ENCODE measurements at regions of chr2 and their contacts with region 1.

Region 1: DNA sequence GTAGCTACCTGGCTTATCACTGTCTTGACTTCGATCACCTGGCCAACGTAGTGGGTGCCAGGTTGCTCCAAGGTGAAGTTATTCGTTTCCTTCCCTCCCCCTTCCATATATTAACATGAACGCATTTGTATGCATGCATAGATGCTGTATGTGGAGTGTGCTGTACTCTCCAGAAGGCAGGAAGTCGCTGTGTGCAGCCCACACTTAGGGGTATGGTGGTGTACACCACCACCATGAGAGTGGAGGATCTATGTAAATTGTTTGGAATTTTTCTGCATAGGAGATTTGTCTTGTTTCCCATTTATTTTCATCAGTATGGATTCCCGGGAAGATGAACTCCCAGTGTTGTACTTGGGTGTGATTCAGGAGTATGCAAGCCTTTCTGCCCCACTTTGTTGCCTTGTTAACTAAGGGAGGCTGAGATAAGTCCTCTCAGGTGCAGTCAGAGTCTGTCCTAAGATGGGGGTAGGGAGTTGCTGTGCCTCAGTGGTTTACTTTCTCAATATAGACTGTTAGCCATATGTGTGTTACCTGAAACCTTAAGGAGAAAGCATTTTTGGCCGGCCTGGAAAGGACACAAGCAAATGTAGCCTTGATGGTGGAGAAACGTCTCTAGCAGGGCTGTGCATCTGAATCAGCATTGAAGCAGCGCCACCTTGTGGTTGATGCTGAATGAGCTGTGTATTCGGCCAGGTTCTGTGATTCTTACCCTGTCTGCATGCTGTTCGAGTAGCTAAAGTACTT is 149.8 kb downstream of the TANC1 start:
- DNase-seq: peak; percentile 38 to 64
- H3K4me3 ChIP-seq: no peak overlapping the region
- H3K27ac ChIP-seq: no peak overlapping the region
- H3K4me1 ChIP-seq: peaks cover 9% of the 10 kb centered on the region
- H3K27me3 ChIP-seq: no peaks in the 10 kb centered on the region
- CTCF ChIP-seq: peak; percentile 88

Region 2: DNA sequence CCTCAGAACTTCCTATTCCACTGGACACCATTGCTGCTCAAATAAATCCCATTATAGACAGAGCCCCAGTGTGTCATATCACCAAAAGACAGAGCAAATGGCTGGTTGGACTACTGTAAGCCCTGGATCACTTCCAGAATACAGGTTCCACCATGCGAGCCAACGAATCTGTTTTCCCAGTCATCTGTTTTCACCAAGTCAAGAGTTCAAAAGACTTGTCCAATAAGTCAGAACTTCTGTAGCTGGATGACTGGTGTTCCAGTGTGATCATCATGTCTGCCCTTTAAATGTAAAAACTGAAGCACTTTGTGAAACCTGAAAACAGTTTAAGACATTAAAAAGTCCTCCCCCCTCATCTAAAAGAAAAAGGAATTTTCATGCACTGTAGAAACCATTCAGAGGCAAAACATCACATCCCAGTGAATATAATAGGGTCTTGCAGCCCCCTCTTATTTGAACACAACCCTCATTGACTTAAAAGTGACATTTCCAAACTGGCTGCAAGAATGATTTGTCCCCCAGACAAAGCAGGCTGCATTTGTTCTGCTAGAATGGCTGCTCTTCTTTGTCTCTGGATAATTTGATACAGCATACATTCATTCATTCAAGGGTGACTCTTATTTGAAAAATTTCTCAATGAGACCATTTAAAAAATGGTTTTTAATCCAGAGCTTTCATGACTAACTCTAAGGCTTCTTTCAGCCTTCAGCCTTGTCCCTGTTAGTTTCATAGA is 214.4 kb before region 1 on chr2:
- CTCF ChIA-PET with region 1: no interaction called
- POLR2A ChIA-PET with region 1: no interaction called
- intact Hi-C with region 1: loop called (anchors 1 kb)
- DNase-seq: no peak
- H3K4me3 ChIP-seq: no peak overlapping the region
- H3K27ac ChIP-seq: no peak overlapping the region
- H3K4me1 ChIP-seq: no peaks in the 10 kb centered on the region
- H3K27me3 ChIP-seq: no peaks in the 10 kb centered on the region
- CTCF ChIP-seq: no peak

Region 3: DNA sequence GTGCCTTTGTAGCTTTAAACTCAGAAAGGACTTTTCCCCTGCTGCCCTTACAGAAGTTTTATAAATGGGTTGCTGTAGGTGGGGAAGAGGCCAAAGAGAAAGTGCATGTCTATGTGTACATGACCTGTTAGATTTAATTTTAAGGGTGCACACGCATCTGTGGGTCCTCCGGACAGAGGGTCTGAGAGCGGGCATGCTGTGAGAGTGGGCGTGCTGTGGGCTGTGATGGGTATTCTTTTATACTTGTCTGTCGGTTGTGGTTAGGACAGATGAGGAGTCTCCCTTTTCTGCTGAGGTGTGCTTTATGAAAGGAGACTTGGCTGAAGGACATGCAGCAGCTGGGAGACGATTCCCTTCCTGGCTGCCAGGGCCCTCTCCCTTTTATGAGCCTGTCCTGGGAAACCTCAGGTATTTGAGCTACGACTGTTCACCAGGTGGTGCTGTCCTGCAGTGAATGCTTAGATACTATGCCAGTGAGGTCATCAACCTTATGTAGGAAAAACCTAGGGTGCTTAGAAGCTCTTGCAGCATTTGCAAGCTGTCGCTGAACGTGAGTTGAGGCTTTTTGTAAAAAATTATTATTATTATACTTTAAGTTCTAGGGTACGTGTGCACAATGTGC is 82.4 kb before region 1 on chr2:
- CTCF ChIA-PET with region 1: interaction called, 7 read pairs
- POLR2A ChIA-PET with region 1: no interaction called
- intact Hi-C with region 1: loop called (anchors 1 kb)
- DNase-seq: peak; percentile 43 to 62
- H3K4me3 ChIP-seq: no peak overlapping the region
- H3K27ac ChIP-seq: peak overlapping the region; percentile 19; the same call in 1 of the 2 replicates
- H3K4me1 ChIP-seq: peaks cover 14% of the 10 kb centered on the region
- H3K27me3 ChIP-seq: no peaks in the 10 kb centered on the region
- CTCF ChIP-seq: peak; percentile 57

Region 4: DNA sequence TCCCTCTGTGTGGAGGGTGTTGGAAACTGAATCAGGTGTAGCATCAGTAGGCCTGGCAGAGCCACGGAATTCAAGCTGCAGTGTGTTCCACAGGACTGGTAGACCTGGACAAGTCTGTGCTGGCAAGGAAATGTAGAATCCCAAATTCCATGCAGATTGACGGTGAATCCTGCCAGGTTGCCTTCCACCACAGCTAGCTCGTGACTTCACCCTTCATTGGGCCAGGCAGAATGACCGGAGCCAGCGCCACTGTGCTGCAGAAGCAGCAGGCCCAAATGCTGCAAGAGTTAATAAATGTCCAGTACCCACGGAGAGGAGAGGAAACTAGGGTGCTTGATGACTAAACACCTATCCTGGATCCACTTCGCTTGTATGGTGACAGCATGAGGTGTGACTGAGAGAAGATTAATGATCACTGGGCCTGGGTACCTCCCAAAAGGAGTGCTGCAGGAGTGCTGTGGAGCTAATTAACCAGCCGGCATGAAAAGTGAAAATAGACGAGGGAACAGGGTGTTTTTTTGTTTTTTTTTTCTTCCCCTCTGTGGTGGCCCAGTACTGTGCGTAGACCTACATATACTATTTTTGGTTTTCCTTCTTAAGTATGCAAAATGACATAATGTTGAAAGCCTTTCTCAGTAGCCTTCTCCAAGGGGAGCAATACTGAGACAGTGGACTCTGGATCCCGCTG is 27.6 kb before region 1 on chr2:
- CTCF ChIA-PET with region 1: no interaction called
- POLR2A ChIA-PET with region 1: no interaction called
- intact Hi-C with region 1: no loop called
- DNase-seq: no peak
- H3K4me3 ChIP-seq: no peak overlapping the region
- H3K27ac ChIP-seq: 0 out of 2 replicates have a peak overlapping the region, but pooled peaks have one; percentile 23
- H3K4me1 ChIP-seq: peaks cover 15% of the 10 kb centered on the region
- H3K27me3 ChIP-seq: no peaks in the 10 kb centered on the region
- CTCF ChIP-seq: no peak

Region 5: DNA sequence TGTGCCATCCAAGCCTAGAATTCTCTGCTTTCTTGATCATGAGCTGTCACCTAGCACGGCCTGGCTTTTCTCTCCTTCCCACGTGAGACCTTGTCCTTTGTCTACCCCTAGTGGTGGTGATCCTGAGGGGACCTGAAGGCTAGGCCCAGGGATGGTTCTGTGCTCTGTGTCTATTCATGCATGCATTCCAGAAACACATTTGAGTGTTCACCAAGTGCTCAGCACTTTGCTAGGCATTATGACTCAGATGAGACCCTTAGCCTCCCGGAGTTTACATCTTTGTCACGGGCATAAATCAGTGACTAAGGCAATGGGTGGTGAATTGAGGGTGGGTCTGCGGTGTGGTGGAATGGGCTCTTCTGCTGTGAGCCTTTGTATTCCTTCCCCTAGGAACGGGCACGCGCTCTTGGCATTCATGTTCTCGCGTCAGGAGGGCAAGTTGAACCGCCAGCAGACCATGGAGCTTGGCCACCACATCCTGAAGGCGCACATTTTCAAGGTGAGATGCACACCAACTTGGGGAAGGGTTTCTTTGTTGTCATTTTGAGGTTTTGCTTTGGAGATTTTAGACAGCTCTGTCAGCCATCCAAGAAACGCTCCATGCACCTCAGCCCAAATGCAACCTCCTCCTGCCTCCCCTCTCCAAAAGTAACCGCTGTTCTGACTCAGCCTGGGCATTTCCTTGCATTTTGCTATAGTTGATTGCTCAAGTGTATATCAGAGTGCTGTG is 67.3 kb after region 1 on chr2:
- CTCF ChIA-PET with region 1: interaction called, 3 read pairs
- POLR2A ChIA-PET with region 1: no interaction called
- intact Hi-C with region 1: loop called (anchors 5 kb)
- DNase-seq: no peak
- H3K4me3 ChIP-seq: no peak overlapping the region
- H3K27ac ChIP-seq: no peak overlapping the region
- H3K4me1 ChIP-seq: no peaks in the 10 kb centered on the region
- H3K27me3 ChIP-seq: no peaks in the 10 kb centered on the region
- CTCF ChIP-seq: 0 out of 2 replicates have a peak, but pooled peaks have one; percentile 23

Measured in PC-9 (cell line).